OCI-LY7 (cell line): ENCODE measurements at regions of chr3 and their contacts with region 1.

Region 1: DNA sequence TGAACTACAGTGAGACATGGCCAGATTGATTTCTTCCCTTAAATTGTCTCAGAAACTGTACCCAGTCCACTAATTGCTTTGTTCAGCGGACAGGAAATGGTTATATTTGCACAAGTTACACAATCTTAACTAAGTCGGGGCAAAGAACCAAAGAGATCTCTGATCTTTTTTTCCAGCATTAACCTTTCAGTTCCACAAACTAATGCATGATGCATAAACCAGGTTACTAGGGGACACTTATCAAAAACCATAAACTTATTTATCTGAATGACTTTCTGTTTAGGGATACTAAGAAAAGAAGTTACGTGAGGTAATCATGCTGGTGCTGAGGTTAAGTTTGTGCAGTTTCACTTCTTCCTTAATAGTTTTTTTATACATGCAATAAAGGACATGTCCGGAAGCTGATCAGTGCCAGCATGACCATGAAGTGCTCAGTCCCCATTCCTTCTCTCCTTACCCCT is 22.4 kb downstream of the FNDC3B start:
- DNase-seq: peak; percentile 71
- H3K4me3 ChIP-seq: peak overlapping the region; percentile 55
- H3K27ac ChIP-seq: peak overlapping the region; percentile 81
- H3K4me1 ChIP-seq: peaks cover 57% of the 10 kb centered on the region
- CTCF ChIP-seq: no peak

Region 2: DNA sequence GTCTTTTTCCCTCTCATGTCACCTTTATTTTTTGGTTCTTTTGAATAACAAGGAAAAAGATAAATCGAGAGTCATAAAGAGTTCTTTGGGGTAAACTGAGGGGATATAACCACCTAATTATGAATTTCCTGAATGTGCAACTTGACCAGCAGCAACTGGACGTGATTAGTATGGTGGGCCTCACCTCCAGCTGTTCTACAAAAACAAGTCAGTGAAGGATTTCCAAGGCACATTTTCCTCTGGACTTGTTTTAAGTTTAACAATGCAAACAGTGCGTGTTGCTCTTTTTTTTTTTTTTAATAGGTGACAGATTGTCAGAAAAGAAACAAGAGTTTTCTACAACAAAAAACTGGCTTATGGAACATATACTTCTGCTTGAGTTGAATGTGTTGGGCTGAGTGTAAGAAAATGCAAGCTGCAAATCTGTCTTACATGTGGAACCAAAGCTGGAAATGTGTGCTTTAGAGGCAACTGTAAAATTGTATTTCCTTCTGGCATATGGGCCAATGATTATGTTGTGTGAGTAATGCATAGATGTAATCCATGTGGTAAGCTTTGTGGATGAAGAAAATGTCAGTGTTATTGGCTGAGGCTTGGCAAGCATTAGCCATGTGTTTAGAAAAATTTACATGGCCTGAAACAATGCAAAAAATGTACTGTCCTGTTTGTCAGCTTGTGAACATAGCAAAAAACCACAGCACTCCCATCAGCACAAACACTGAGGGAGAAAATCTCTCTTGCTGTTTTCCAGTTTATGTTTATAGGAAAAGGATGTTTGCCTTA is 66.9 kb before region 1 on chr3:
- CTCF ChIA-PET with region 1: no interaction called
- POLR2A ChIA-PET with region 1: no interaction called
- intact Hi-C with region 1: no loop called
- DNase-seq: no peak
- H3K4me3 ChIP-seq: no peak overlapping the region
- H3K27ac ChIP-seq: no peak overlapping the region
- H3K4me1 ChIP-seq: no peaks in the 10 kb centered on the region
- CTCF ChIP-seq: no peak

Region 3: GRCh38 chr3:172101107-172101506 is 39.4 kb after region 1 on chr3:
- CTCF ChIA-PET with region 1: no interaction called
- POLR2A ChIA-PET with region 1: interaction called, 10 read pairs
- intact Hi-C with region 1: loop called (anchors 1 kb)
- DNase-seq: peak; percentile 92
- H3K4me3 ChIP-seq: peak overlapping the region; percentile 53
- H3K27ac ChIP-seq: peak overlapping the region; percentile 96
- H3K4me1 ChIP-seq: peaks cover 97% of the 10 kb centered on the region
- CTCF ChIP-seq: no peak